Posterior vena cava (tissue), 2 donors: ENCODE measurements at regions of chr4 and their contacts with region 1.

Region 1: GRCh38 chr4:151248519-151248918 is 28.4 kb upstream of the PRSS48 start:
- DNase-seq: no peak

Region 2: DNA sequence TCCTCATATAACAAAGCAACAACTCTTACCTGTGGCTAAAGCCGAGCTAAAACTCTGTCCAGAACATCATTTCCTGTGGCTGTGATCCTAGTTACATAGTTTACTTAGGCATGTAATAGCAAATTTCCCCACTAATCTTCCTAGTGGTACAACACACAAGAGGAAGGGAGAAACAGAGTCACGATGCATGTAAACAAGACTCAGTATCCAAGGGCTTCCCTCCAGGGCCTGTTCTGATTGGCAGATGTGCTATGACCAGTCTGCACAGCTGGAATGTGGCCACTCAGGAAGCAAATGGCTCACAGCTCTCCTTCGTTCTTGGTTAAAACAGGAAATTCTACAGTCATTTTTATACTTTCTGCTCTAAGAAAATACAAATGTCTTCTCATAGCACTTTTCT is 20.8 kb before region 1 on chr4:
- intact Hi-C with region 1: loop called in 1 of 2 experiments (anchors 2 kb)
- DNase-seq: peak; percentile 88